ENCODE measurements at regions of chr13 and their contacts with region 1.

Region 1: GRCh38 chr13:26698392-26699196 is 62.0 kb downstream of the GPR12 start:
- DNase-seq: peak; percentile 54
- ATAC-seq: peak; percentile 93
- H3K4me3 ChIP-seq: no peak overlapping the region
- H3K27ac ChIP-seq: no peak overlapping the region
- H3K4me1 ChIP-seq: peaks cover 0 to 8% of the 10 kb centered on the region in 2 experiments; a peak in 1 of 4 replicates
- H3K27me3 ChIP-seq: peaks cover 9% of the 10 kb centered on the region
- CTCF ChIP-seq: peak; percentile 72 to 96 (median 90)
- POLR2A ChIP-seq: no peak
- RAD21 ChIP-seq: peak; percentile 88

Region 2: GRCh38 chr13:26186118-26186870 is 512.3 kb before region 1 on chr13:
- CTCF ChIA-PET with region 1: interaction called, 110 read pairs
- POLR2A ChIA-PET with region 1: interaction called, 5 read pairs
- RAD21 ChIA-PET with region 1: interaction called, 17 read pairs
- intact Hi-C with region 1: loop called (anchors 1 kb)
- DNase-seq: peak; percentile 65
- ATAC-seq: peak; percentile 89
- H3K4me3 ChIP-seq: peak overlapping the region; percentile 7 to 32; a peak in 2 of 4 replicates
- H3K27ac ChIP-seq: no peak overlapping the region
- H3K4me1 ChIP-seq: peaks cover 0 to 8% of the 10 kb centered on the region in 2 experiments; a peak in 2 of 4 replicates
- H3K27me3 ChIP-seq: no peaks in the 10 kb centered on the region
- CTCF ChIP-seq: peak; percentile 27 to 35 (median 27); a peak in 4 of 6 replicates
- POLR2A ChIP-seq: no peak
- RAD21 ChIP-seq: no peak

Region 3: DNA sequence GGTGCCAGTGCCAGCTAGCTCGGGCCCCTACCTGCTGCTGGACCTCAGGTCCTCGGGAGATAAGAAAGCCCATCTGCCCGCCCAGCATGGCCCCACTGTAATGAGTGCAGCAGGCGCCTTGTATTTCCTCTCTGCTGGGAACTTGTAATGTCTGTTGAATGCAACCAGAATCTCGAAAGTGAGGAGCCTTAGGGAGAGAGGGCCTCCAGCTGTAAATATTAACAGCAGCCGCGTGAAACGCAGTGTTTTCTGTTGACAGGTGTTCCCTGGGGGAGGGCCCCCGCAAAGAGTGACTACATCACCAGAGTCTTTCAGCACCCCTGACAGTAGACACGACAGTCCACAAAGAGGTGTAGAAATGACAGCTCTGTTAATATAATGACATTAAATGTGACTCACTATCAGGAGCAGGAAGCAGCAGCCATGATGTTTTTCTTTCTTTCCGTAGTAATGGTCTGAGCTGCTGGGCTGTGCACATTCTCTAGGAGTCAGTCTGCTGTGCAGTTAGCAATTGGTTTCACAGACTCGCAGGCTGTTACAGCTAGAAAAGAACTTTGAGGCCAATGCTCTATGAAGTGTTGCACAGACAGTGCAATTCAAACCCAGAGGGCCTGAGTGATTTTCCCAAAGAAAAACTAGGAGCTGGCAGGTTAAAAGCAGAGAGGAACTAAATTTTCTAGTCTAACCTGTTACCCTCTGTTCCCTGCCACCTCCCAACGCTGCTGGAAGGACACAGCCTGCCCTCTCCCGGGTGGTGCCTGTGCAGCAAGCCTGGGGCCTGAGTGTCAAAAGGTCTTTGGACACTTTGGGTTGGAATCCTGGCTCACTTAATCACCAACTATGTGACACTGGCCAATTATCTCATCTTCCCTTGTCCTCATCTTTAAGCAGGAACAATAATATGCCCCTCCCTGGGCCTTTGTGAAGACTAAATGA is 199.7 kb before region 1 on chr13:
- CTCF ChIA-PET with region 1: interaction called, 32 read pairs
- POLR2A ChIA-PET with region 1: no interaction called
- RAD21 ChIA-PET with region 1: interaction called, 4 to 5 read pairs
- intact Hi-C with region 1: loop called (anchors 5 kb)
- DNase-seq: no peak
- ATAC-seq: no peak
- H3K4me3 ChIP-seq: no peak overlapping the region
- H3K27ac ChIP-seq: no peak overlapping the region
- H3K4me1 ChIP-seq: no peaks in the 10 kb centered on the region
- H3K27me3 ChIP-seq: no peaks in the 10 kb centered on the region
- CTCF ChIP-seq: no peak
- POLR2A ChIP-seq: no peak
- RAD21 ChIP-seq: 0 out of 2 replicates have a peak, but pooled peaks have one; percentile 4

Region 4: GRCh38 chr13:26680123-26680450 is 18.5 kb before region 1 on chr13:
- CTCF ChIA-PET with region 1: interaction called, 15 read pairs
- POLR2A ChIA-PET with region 1: no interaction called
- RAD21 ChIA-PET with region 1: no interaction called
- intact Hi-C with region 1: no loop called
- DNase-seq: no peak
- ATAC-seq: peak; percentile 57; the same call in 1 of the 2 replicates
- H3K4me3 ChIP-seq: no peak overlapping the region
- H3K27ac ChIP-seq: no peak overlapping the region
- H3K4me1 ChIP-seq: peaks cover 5 to 19% of the 10 kb centered on the region in 2 experiments; a peak in 3 of 4 replicates
- H3K27me3 ChIP-seq: peaks cover 14% of the 10 kb centered on the region; the same call in 1 of the 2 replicates
- CTCF ChIP-seq: no peak
- POLR2A ChIP-seq: no peak
- RAD21 ChIP-seq: no peak

Region 5: GRCh38 chr13:26713341-26713740 is 14.7 kb after region 1 on chr13:
- CTCF ChIA-PET with region 1: no interaction called
- POLR2A ChIA-PET with region 1: no interaction called
- RAD21 ChIA-PET with region 1: no interaction called
- intact Hi-C with region 1: no loop called
- DNase-seq: no peak
- ATAC-seq: no peak
- H3K4me3 ChIP-seq: no peak overlapping the region
- H3K27ac ChIP-seq: no peak overlapping the region
- H3K4me1 ChIP-seq: no peaks in the 10 kb centered on the region
- H3K27me3 ChIP-seq: 0 out of 2 replicates have a peak, but pooled peaks cover 12% of the 10 kb centered on the region
- CTCF ChIP-seq: no peak
- POLR2A ChIP-seq: no peak
- RAD21 ChIP-seq: no peak

Region 6: GRCh38 chr13:26895081-26895807 is 196.7 kb after region 1 on chr13:
- CTCF ChIA-PET with region 1: no interaction called
- POLR2A ChIA-PET with region 1: no interaction called
- RAD21 ChIA-PET with region 1: no interaction called
- intact Hi-C with region 1: no loop called
- DNase-seq: no peak
- ATAC-seq: no peak
- H3K4me3 ChIP-seq: no peak overlapping the region
- H3K27ac ChIP-seq: no peak overlapping the region
- H3K4me1 ChIP-seq: no peaks in the 10 kb centered on the region
- H3K27me3 ChIP-seq: peaks cover 14% of the 10 kb centered on the region
- CTCF ChIP-seq: no peak
- POLR2A ChIP-seq: no peak
- RAD21 ChIP-seq: no peak

Region 7: DNA sequence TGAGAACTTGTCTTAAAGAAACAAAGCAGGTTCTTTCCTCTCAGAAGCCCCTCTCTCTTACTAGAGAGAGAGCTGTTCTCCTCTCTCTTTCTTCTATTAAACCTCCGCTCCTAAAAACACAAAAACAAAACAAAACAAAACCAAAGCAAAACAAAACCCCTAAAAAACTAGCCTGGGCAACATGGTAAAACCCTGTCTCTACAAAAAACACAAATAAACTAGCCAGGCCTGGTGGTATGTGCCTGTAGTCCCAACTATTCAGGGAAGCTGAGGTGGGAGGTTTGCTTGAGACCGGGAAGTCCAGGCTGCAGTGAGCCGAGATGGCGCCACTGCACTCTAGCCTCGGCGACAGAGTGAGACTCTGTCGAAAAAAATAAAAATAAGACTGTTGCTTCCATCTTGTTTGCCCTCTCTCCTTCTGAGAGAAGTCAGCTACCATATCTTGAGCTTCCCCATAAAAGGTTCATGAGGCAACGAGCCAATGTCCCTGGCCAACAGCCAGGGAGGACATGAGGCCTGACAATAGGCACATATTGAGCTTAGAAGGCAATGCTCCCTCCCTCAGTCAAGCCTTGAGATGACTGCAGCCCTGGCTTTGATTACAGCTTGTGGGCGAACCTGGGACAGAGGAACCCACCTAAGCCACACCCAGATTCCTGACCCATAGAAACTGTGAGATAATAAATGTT is 1419.2 kb after region 1 on chr13:
- CTCF ChIA-PET with region 1: no interaction called
- POLR2A ChIA-PET with region 1: no interaction called
- RAD21 ChIA-PET with region 1: no interaction called
- intact Hi-C with region 1: no loop called
- DNase-seq: no peak
- ATAC-seq: peak; percentile 61; the same call in 1 of the 2 replicates
- H3K4me3 ChIP-seq: no peak overlapping the region
- H3K27ac ChIP-seq: no peak overlapping the region
- H3K4me1 ChIP-seq: peaks cover 0 to 3% of the 10 kb centered on the region in 2 experiments; a peak in 1 of 4 replicates
- H3K27me3 ChIP-seq: no peaks in the 10 kb centered on the region
- CTCF ChIP-seq: 0 out of 6 replicates have a peak, but pooled peaks of 1 of the 3 experiments have one; percentile 6
- POLR2A ChIP-seq: no peak
- RAD21 ChIP-seq: no peak

Measured in HCT116 (cell line).